ENCODE measurements at regions of chr3 and their contacts with region 1.

Region 1: GRCh38 chr3:17841190-17841828 is 98.9 kb upstream of the TBC1D5 start:
- DNase-seq: peak; percentile 75
- H3K4me3 ChIP-seq: no peak overlapping the region; a peak in 1 of 4 replicates
- H3K27ac ChIP-seq: no peak overlapping the region
- H3K4me1 ChIP-seq: no peaks in the 10 kb centered on the region; a peak in 1 of 4 replicates
- H3K27me3 ChIP-seq: no peaks in the 10 kb centered on the region
- CTCF ChIP-seq: peak; percentile 94
- EP300 ChIP-seq: no peak
- RAD21 ChIP-seq: peak; percentile 99

Region 2: DNA sequence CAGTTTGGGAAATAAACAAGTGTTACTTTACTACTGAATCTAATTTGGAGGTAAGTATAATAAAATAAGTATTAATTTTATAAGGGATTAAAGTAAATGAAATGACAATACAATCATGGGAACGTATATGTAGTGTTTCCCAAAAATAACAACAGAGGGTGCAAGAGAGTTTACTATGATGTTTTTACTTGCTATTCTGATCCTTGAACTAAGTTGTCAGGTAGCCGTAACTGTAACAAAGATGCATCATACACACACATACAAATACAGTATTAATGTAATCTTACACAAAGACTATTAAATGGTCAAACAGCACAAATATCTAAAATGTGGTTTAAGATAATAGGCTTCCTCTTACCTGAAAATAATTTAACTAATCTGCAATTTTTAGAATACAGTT is 410.3 kb before region 1 on chr3:
- CTCF ChIA-PET with region 1: interaction called, 52 read pairs
- POLR2A ChIA-PET with region 1: no interaction called
- DNase-seq: peak; percentile 38
- H3K4me3 ChIP-seq: no peak overlapping the region
- H3K27ac ChIP-seq: peak overlapping the region in 1 of 2 experiments; percentile 47; a peak in 1 of 4 replicates
- H3K4me1 ChIP-seq: peaks cover 4 to 8% of the 10 kb centered on the region in 2 experiments; a peak in 2 of 4 replicates
- H3K27me3 ChIP-seq: no peaks in the 10 kb centered on the region
- CTCF ChIP-seq: peak; percentile 63
- EP300 ChIP-seq: no peak
- RAD21 ChIP-seq: peak; percentile 79

Region 3: GRCh38 chr3:17544632-17545031 is 296.7 kb before region 1 on chr3:
- CTCF ChIA-PET with region 1: interaction called, 10 read pairs
- POLR2A ChIA-PET with region 1: no interaction called
- DNase-seq: no peak
- H3K4me3 ChIP-seq: no peak overlapping the region
- H3K27ac ChIP-seq: no peak overlapping the region
- H3K4me1 ChIP-seq: no peaks in the 10 kb centered on the region; a peak in 1 of 4 replicates
- H3K27me3 ChIP-seq: no peaks in the 10 kb centered on the region
- CTCF ChIP-seq: peak; percentile 44
- EP300 ChIP-seq: no peak
- RAD21 ChIP-seq: peak; percentile 43; the same call in 1 of the 2 replicates

Region 4: DNA sequence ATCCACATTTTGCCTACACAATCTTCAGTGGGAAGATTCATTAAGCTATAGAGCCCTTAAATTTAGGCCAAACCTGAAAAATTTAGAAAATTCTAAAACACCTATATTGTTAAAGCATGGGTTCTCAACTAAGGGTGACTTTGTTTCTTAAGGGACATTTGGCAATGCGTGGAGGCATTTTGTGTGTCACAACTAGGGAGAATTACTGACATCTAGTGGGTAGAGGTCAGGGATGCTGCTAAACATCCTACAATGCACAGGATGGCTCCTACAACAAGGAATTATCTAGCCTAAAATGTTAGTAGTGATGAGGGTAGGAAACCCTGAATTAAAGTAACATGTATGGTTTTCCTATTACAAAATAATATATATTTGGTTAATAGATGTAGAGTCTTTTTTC is 154.7 kb before region 1 on chr3:
- CTCF ChIA-PET with region 1: interaction called, 14 read pairs
- POLR2A ChIA-PET with region 1: no interaction called
- DNase-seq: peak; percentile 13
- H3K4me3 ChIP-seq: no peak overlapping the region
- H3K27ac ChIP-seq: no peak overlapping the region
- H3K4me1 ChIP-seq: peaks cover 1 to 5% of the 10 kb centered on the region in 2 experiments; a peak in 3 of 4 replicates
- H3K27me3 ChIP-seq: no peaks in the 10 kb centered on the region
- CTCF ChIP-seq: peak; percentile 44; the same call in 1 of the 2 replicates
- EP300 ChIP-seq: no peak
- RAD21 ChIP-seq: peak; percentile 70

Region 5: GRCh38 chr3:17742108-17742879 is 99.0 kb before region 1 on chr3 and contains the start of gene TBC1D5:
- CTCF ChIA-PET with region 1: interaction called, 14 read pairs
- POLR2A ChIA-PET with region 1: interaction called, 3 read pairs
- DNase-seq: peak; percentile 95
- H3K4me3 ChIP-seq: peak within 1 kb of the TSS; percentile 81 to 90
- H3K27ac ChIP-seq: peak within 1 kb of the TSS; percentile 95 to 99
- H3K4me1 ChIP-seq: peaks cover 9 to 21% of the 10 kb centered on the region in 2 experiments; a peak in 2 of 4 replicates
- H3K27me3 ChIP-seq: no peaks in the 10 kb centered on the region
- CTCF ChIP-seq: no peak
- EP300 ChIP-seq: 0 out of 4 replicates have a peak, but pooled peaks of 1 of the 2 experiments have one; percentile 9
- RAD21 ChIP-seq: no peak
- polyA plus RNA-seq, gene TBC1D5: 19.5 and 22.5 TPM in 2 replicates

Region 6: GRCh38 chr3:17927036-17927435 is 85.7 kb after region 1 on chr3:
- CTCF ChIA-PET with region 1: no interaction called
- POLR2A ChIA-PET with region 1: no interaction called
- DNase-seq: no peak
- H3K4me3 ChIP-seq: no peak overlapping the region
- H3K27ac ChIP-seq: no peak overlapping the region
- H3K4me1 ChIP-seq: no peaks in the 10 kb centered on the region
- H3K27me3 ChIP-seq: no peaks in the 10 kb centered on the region
- CTCF ChIP-seq: no peak
- EP300 ChIP-seq: no peak
- RAD21 ChIP-seq: no peak

Region 7: DNA sequence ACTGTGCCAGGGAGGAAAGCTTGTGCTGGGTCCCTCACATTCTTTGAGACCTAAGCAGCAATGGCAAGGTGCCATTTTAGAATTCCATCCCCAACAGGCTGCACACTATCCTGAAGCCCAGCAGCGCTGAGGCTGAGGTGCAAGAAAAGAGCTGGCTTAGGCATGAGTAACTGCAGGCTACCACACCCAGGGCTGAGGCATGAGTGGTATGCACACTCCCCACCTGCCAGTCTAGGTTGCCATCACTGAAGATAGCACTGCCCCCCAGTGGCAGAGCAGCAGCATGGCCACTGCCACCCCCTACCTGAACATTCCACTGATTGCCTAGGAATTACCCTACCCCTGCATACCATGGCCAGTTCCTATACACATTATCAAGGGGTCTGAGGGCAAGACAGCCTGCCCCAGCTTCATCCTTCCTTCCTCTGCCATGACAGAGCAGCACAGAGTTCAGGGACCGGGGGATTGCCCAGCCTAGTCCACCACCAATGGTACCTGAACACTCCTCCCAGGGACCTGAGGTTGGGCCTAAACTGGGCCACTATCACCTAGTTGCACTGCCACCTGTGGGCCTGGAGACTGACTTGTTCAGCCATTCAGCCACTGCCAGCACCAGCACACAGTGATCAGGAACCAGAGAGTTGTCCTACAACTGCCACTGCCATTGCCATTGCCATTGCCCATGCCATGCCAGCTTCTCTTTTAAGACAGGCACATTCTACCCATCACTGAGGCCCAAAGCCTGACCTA is 454.0 kb after region 1 on chr3:
- CTCF ChIA-PET with region 1: no interaction called
- POLR2A ChIA-PET with region 1: no interaction called
- DNase-seq: peak; percentile 12
- H3K4me3 ChIP-seq: no peak overlapping the region
- H3K27ac ChIP-seq: peak overlapping the region in 1 of 2 experiments; percentile 47; a peak in 2 of 4 replicates
- H3K4me1 ChIP-seq: no peaks in the 10 kb centered on the region
- H3K27me3 ChIP-seq: no peaks in the 10 kb centered on the region
- CTCF ChIP-seq: peak; percentile 59
- EP300 ChIP-seq: no peak
- RAD21 ChIP-seq: peak; percentile 63